Endothelial cell of umbilical vein (primary cell): ENCODE measurements at regions of chr9 and their contacts with region 1.

Region 1: GRCh38 chr9:5799314-5799713 is 33.6 kb downstream of the ERMP1 start:
- DNase-seq: peak; percentile 82
- H3K4me3 ChIP-seq: no peak overlapping the region
- H3K27ac ChIP-seq: no peak overlapping the region
- H3K4me1 ChIP-seq: peaks cover 2% of the 10 kb centered on the region
- H3K27me3 ChIP-seq: no peaks in the 10 kb centered on the region
- CTCF ChIP-seq: peak; percentile 61 to 71
- POLR2A ChIP-seq: no peak

Region 2: DNA sequence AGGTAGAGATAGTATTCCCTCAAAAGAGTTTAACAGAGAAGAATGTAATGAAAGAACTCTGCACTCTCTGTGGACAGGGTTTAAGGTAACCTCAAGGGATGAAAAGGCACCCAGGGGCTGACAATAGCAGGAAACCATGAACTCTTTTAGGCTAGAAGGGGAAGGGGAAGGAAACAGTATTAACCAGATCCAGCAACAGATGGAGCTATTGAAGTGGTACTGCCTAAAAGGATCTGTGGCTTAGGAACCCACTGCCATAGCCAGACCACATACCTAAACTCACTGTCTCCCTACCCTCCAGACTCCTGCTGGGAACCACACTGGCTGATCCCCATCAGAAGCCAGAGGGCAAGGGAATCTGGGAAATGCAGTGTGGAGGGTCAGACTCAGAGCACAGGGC is 397.1 kb before region 1 on chr9:
- CTCF ChIA-PET with region 1: no interaction called
- POLR2A ChIA-PET with region 1: no interaction called
- dilution Hi-C with region 1: no loop called
- intact Hi-C with region 1: no loop called
- DNase-seq: no peak
- H3K4me3 ChIP-seq: no peak overlapping the region
- H3K27ac ChIP-seq: no peak overlapping the region
- H3K4me1 ChIP-seq: no peaks in the 10 kb centered on the region
- H3K27me3 ChIP-seq: no peaks in the 10 kb centered on the region
- CTCF ChIP-seq: no peak
- POLR2A ChIP-seq: no peak

Region 3: DNA sequence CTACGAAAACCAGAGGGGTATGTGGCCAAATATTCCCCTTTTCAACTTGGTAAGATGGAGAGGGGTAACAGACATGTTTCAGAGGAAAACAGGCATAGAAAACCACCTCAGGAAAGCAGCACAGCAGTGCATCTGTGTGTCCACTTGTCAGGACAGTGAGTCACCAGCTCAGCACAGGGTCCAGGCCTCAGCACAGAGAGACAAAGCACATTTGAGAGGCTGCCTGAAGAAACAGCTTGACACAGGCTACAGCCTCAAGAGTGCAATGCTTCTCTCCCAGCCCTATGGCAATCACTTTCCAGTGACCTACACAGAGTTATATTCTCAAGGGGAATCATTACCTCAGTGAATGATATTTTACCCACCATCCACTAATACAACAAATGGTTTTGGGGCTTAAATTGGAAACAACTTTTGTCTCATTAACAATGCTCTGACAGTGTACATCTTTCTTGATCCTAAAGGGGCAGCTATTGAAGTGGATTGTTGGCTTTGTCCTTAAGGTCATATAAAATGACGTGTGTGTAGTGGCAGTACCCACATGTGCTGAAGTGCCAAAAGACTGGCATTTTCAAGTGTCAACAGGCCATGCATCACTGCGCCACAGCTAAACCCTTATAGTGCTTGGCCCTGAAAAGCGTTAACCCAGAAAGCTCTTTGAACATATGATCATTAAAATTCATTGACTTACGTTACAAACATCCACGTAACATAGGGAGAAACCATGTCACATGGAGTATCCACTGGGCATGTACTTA is 12.8 kb before region 1 on chr9:
- CTCF ChIA-PET with region 1: interaction called, 10 read pairs
- POLR2A ChIA-PET with region 1: no interaction called
- dilution Hi-C with region 1: no loop called
- intact Hi-C with region 1: no loop called
- DNase-seq: peak; percentile 74
- H3K4me3 ChIP-seq: no peak overlapping the region
- H3K27ac ChIP-seq: no peak overlapping the region
- H3K4me1 ChIP-seq: peaks cover 10% of the 10 kb centered on the region
- H3K27me3 ChIP-seq: no peaks in the 10 kb centered on the region
- CTCF ChIP-seq: no peak
- POLR2A ChIP-seq: no peak

Region 4: DNA sequence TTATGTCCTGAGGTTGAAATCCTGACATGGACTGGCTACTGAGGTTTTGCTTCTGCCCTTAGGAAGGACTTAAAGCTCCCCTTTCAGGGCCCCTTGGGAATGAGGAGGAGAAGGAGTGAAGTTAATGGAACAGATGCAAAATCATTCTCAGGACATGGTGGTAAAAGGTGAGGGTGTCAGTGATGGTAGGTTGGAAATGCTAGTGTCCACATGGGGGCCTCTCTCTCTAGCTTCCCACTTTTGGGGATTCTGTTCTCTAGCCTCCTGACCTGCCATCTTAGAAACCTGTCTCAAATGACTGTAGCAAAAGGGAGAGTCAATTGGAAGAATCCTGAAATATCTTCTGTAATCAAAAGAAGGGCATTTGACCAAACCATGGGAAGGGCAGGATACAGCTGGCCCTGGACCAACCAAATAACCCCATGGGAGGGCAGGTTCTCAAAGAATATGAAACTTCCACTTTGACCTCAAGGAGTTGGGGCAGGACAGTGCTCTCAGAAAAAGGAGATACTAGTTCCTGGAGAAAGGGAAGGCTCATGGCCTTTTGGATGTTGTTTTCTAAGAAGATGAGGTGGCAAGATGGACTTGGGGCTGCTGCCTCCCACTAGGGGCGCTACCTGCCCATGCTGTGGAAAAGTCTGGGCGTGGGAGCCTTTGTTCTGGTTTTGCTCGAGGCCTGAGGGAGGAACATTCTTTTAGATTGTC is 70.2 kb after region 1 on chr9:
- CTCF ChIA-PET with region 1: no interaction called
- POLR2A ChIA-PET with region 1: no interaction called
- dilution Hi-C with region 1: no loop called
- intact Hi-C with region 1: no loop called
- DNase-seq: no peak
- H3K4me3 ChIP-seq: no peak overlapping the region
- H3K27ac ChIP-seq: no peak overlapping the region
- H3K4me1 ChIP-seq: no peaks in the 10 kb centered on the region
- H3K27me3 ChIP-seq: no peaks in the 10 kb centered on the region
- CTCF ChIP-seq: peak in 1 of 2 donors; percentile 13
- POLR2A ChIP-seq: no peak

Region 5: DNA sequence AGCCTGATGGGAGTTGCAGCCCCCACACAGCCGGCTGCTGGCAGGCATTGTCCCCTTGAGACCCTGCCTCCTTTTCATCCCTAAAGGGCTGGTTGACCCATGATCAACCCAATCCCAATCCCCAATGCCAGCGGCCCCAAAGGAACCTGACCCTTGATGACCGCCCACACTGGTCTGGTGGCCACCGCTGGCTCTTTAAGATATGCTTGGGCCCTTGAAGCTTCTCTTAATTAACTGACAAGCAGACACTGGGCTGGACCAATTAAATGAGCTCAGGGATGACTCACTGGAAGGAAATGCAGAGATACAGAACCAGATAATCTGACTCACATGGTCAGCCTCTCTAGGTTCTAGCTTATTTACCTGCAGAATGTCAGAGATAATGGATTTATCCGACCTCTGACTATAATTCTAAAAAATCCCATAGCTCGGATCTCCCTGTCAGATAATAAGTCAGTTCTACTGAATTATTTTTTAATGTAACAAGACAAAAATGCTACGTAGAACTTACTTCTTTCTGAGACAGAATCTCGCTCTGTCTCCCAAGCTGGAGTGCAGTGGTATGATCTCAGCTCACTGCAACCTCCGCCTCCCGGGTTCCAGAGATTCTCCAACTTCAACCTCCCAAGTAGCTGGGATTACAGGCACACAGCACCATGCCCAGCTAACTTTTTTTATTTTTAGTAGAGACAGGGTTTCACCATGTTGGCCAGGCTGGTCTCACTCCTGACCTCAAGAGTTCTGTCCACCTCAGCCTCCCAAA is 80.3 kb after region 1 on chr9:
- CTCF ChIA-PET with region 1: interaction called, 10 read pairs
- POLR2A ChIA-PET with region 1: no interaction called
- dilution Hi-C with region 1: no loop called
- intact Hi-C with region 1: no loop called
- DNase-seq: peak; percentile 37
- H3K4me3 ChIP-seq: no peak overlapping the region
- H3K27ac ChIP-seq: no peak overlapping the region
- H3K4me1 ChIP-seq: peaks cover 4% of the 10 kb centered on the region
- H3K27me3 ChIP-seq: no peaks in the 10 kb centered on the region
- CTCF ChIP-seq: no peak
- POLR2A ChIP-seq: no peak

Region 6: GRCh38 chr9:6008169-6008979 is 209.1 kb after region 1 on chr9:
- CTCF ChIA-PET with region 1: interaction called, 8 read pairs
- POLR2A ChIA-PET with region 1: no interaction called
- dilution Hi-C with region 1: no loop called
- intact Hi-C with region 1: loop called (anchors 2 kb)
- DNase-seq: peak; percentile 98
- H3K4me3 ChIP-seq: peak overlapping the region; percentile 65 to 98 (median 89)
- H3K27ac ChIP-seq: peak overlapping the region; percentile 60
- H3K4me1 ChIP-seq: peaks cover 22% of the 10 kb centered on the region
- H3K27me3 ChIP-seq: no peaks in the 10 kb centered on the region
- CTCF ChIP-seq: no peak
- POLR2A ChIP-seq: peak; percentile 50

Region 7: GRCh38 chr9:6197330-6197729 is 398.0 kb after region 1 on chr9:
- CTCF ChIA-PET with region 1: no interaction called
- POLR2A ChIA-PET with region 1: no interaction called
- dilution Hi-C with region 1: no loop called
- intact Hi-C with region 1: loop called (anchors 10 kb)
- DNase-seq: peak; percentile 67
- H3K4me3 ChIP-seq: no peak overlapping the region
- H3K27ac ChIP-seq: no peak overlapping the region
- H3K4me1 ChIP-seq: peaks cover 18% of the 10 kb centered on the region
- H3K27me3 ChIP-seq: no peaks in the 10 kb centered on the region
- CTCF ChIP-seq: peak; percentile 29 to 42
- POLR2A ChIP-seq: no peak